Activated CD4-positive, alpha-beta T cell treated with anti-CD3 and anti-CD28 coated beads for 36 hours (primary cell): ENCODE measurements at regions of chrX and their contacts with region 1.

Region 1: DNA sequence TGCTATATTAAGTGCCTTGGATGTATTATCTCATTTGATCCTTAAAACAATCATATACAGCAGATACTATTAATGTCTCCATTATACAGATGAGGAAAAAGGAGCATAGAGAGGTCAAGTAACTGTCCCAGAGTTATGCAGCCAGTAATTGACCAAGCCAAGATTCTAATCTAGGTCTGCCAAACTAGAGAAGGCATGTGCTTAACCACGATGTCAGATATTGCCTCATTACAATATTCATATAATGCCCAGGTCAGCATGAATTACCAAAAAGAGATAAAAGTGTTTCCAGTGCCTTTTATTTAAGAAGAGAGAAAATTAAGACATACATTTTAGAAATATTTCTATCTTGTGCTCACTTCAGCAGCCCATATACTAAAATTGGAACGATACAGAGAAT is 7.1 kb downstream of the ARHGEF6 start:
- DNase-seq: no peak
- ATAC-seq: no peak
- H3K4me3 Mint-ChIP-seq: no peak overlapping the region
- H3K27ac Mint-ChIP-seq: no peak overlapping the region
- H3K4me1 Mint-ChIP-seq: peaks cover 65% of the 10 kb centered on the region
- H3K27me3 Mint-ChIP-seq: no peaks in the 10 kb centered on the region

Region 2: DNA sequence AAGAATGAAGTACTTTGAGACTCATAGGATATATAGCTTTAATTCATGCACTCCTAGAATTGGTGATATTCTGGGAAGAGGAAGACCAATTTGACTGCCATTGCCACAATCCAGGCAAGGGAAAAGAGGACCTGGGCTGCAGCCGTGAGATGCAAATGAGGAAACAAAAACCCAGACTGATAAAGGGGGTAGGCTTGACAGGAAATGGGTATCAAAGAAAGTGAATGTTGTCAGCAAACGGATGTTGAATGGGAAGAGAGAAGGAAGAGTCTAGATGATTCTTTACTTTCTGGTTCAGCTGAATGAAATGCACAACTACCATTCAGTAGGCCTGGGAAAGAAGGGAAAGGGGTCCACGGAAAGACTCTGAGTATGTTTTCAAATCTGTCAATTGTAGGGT is 24.1 kb after region 1 on chrX:
- CTCF ChIA-PET with region 1: no interaction called
- POLR2A ChIA-PET with region 1: no interaction called
- intact Hi-C with region 1: loop called in 1 of 2 experiments (anchors 2 kb)
- DNase-seq: no peak
- ATAC-seq: no peak
- H3K4me3 Mint-ChIP-seq: no peak overlapping the region
- H3K27ac Mint-ChIP-seq: no peak overlapping the region
- H3K4me1 Mint-ChIP-seq: peaks cover 10% of the 10 kb centered on the region
- H3K27me3 Mint-ChIP-seq: no peaks in the 10 kb centered on the region